WTC11 (cell line): ENCODE measurements at regions of chr3 and their contacts with region 1.

Region 1: DNA sequence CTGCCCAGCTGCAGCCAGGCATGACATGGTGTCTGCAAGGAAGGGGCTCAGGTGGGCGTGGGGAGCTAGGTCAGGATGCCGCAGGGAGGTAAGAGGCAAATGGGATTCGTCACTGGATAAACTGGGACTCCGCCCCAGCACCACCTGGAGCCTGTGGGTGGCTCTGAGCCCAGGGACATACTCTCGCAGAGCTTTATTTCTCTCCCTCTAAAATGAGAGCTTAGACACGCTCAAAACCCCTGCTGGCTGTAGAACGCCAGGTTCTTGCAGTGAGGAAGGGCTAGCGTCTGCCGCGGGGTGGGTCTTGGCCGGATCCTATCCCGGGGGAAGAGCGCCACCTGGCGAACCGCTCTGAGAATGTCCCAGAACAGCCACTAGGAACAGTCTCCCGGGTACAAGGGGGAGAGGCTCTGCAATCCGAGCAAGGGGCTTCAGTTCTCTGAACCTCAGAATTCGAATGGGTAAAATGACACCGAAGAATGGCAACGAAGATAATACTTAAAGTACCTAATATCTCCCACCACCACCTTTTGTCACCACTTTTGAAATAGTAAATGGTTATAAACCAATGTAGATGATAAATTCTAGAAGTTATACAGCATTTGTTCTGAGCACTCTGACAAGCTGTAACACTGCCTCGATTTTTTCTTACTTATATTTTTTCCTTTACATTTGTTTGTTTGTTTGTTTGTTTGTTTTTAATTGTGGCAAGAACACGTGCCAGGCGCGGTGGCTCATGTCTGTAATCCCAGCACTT is 53.2 kb upstream of the SRGAP3 start:
- DNase-seq: peak; percentile 89
- ATAC-seq: peak; percentile 91
- H3K4me3 Mint-ChIP-seq: peak overlapping the region; percentile 70
- H3K27ac Mint-ChIP-seq: no peak overlapping the region
- H3K4me1 Mint-ChIP-seq: peaks cover 14% of the 10 kb centered on the region
- H3K27me3 Mint-ChIP-seq: peaks cover 14% of the 10 kb centered on the region
- CTCF ChIP-seq: peak; percentile 85

Region 2: DNA sequence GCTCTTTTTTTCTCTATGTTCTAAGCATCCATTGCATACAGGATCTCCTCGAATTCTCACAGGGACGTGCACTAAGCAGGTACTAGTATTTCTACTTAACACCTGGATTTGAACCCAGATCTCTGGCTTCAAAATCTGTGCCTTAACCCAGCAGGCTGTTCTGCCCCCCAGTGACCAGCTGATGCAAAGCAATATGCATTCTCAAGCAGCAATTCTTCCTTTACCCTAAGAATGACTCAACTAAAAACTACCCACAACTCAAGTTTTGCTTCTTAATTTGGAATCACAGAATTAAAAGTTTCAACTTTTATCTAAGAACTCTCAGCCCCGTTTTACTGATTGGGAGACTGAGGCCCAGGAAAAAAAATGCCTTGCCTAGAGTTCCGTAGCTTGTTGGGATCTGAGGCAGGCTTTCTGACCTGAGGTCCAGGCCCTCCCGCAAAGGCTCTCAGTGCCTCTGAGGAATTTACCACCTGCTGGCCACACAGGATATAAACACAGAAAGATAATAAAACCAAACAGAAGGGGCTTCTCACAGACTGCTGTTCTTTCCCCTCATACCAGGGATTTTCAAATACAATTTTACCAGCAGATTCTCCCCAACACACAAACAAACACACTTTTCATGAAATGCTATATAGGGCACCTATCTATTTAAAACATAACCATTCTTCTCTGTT is 223.9 kb before region 1 on chr3:
- CTCF ChIA-PET with region 1: interaction called, 12 read pairs
- POLR2A ChIA-PET with region 1: no interaction called
- DNase-seq: no peak
- ATAC-seq: peak; percentile 73
- H3K4me3 Mint-ChIP-seq: no peak overlapping the region
- H3K27ac Mint-ChIP-seq: peak overlapping the region; percentile 12; the same call in 1 of the 2 replicates
- H3K4me1 Mint-ChIP-seq: peaks cover 31% of the 10 kb centered on the region
- H3K27me3 Mint-ChIP-seq: no peaks in the 10 kb centered on the region; the same call in 1 of the 2 replicates
- CTCF ChIP-seq: no peak

Region 3: DNA sequence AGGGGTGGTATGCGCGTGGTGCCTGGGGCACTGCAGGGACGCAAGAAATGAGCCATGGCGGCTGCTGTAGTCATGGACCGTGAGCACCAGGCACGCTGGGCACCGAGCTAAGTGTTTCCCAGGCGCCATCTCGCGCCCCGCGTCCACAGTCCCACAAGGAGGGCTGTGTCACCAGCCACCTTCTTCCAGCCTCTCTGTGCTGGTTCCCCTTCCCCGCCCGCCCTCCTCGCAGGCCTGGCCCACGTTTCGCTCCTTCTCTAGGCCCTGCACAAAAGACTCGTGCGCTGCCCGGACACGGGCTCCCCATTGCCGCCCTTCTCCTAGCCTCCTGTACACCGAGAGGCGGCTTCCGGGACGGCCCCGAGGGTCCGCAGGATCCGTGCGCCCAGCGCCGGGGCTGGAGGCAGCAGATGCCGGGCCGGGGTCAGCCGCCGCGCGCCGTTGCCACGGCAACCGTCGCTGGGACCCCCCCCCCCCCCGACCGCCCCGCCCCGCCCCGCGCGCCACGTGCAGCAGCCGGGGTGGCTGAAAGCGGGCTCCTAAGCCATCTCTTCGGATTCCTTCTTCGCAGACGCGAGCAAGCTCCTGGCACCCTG is 166.6 kb before region 1 on chr3:
- CTCF ChIA-PET with region 1: interaction called, 19 read pairs
- POLR2A ChIA-PET with region 1: no interaction called
- DNase-seq: peak; percentile 61
- ATAC-seq: peak; percentile 87
- H3K4me3 Mint-ChIP-seq: peak overlapping the region; percentile 62
- H3K27ac Mint-ChIP-seq: no peak overlapping the region
- H3K4me1 Mint-ChIP-seq: peaks cover 17% of the 10 kb centered on the region
- H3K27me3 Mint-ChIP-seq: peaks cover 22% of the 10 kb centered on the region
- CTCF ChIP-seq: no peak

Region 4: GRCh38 chr3:9168241-9168741 is 134.3 kb before region 1 on chr3:
- CTCF ChIA-PET with region 1: no interaction called
- POLR2A ChIA-PET with region 1: no interaction called
- DNase-seq: peak; percentile 44
- ATAC-seq: peak; percentile 89
- H3K4me3 Mint-ChIP-seq: no peak overlapping the region
- H3K27ac Mint-ChIP-seq: no peak overlapping the region
- H3K4me1 Mint-ChIP-seq: no peaks in the 10 kb centered on the region; the same call in 1 of the 2 replicates
- H3K27me3 Mint-ChIP-seq: no peaks in the 10 kb centered on the region
- CTCF ChIP-seq: no peak

Region 5: DNA sequence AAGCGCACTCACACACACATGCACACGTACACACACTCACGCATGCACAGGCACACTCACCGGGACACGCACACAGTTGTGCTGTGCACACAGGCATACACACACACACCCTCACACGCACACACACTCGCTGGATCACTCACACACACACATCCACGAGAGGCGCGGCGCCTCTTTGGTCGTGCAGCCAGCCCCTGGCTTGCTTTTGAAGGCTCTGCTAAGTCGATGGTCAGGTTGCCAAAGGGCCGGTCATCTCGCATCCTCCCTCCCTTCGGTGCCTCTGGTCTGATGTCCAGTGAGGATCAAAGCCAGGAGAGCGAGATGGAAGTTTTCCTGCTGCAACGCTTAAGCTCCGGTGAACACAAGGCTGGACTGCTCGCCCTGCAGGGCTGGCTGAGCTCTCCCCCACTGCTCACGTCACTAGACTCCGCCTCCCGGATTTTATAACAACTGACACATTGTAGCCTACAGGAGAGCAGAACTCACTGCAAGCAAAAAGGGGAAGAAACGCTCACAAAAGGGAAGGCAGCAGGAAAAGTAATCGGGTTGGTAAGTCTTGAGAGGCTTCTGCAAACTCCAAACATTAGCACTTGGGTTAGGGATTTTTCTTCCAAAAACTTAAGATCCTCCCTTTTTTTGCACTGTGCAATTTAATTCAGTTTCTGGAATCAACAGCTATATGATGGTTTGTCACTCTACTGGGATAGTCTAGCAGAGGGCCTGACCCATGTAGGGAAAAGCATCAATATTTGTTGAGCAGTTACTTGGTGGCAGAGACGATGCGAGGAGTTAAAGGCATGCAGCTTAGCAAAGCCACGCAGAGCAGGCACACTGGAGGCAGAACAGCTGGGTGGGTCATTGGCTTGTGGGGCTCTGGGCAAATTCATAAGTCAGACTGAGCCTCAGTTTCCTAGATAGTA is 53.1 kb before region 1 on chr3 and contains the start of gene SRGAP3:
- CTCF ChIA-PET with region 1: interaction called, 28 read pairs
- POLR2A ChIA-PET with region 1: interaction called, 3 read pairs
- DNase-seq: peak; percentile 85
- ATAC-seq: peak; percentile 97
- H3K4me3 Mint-ChIP-seq: peak within 1 kb of the TSS; percentile 81
- H3K27ac Mint-ChIP-seq: peak within 1 kb of the TSS; percentile 35
- H3K4me1 Mint-ChIP-seq: peaks cover 56% of the 10 kb centered on the region
- H3K27me3 Mint-ChIP-seq: no peaks in the 10 kb centered on the region
- CTCF ChIP-seq: no peak
- total RNA-seq, gene SRGAP3: 11.8 to 17.9 TPM (median 12.1 TPM) in 3 replicates

Region 6: DNA sequence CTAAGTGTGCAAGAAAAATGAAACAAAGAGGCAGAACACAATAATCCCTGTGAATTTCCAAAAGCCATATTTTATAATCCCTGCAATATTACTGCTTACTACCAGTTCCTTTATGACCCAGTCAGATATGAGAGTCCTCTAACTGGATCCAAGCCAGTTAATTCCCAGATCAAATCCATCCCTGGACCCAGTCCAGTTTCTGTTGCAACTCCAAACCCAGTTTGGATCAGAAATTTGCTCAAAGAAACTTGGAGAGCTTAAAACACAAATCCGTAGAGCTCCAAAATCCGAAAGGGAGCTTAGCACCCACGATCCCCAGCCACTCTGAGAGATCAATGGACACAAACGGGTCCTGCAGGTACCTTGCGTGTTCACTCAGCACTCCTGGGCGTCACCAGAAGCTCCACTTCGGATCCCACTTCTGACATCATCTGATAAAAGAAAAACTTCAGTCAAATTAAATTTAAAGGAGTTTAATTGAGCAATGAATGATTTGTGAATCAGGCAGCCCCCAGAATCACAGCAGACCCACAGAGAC is 27.6 kb after region 1 on chr3:
- CTCF ChIA-PET with region 1: no interaction called
- POLR2A ChIA-PET with region 1: no interaction called
- DNase-seq: no peak
- ATAC-seq: no peak
- H3K4me3 Mint-ChIP-seq: no peak overlapping the region
- H3K27ac Mint-ChIP-seq: no peak overlapping the region
- H3K4me1 Mint-ChIP-seq: peaks cover 9% of the 10 kb centered on the region
- H3K27me3 Mint-ChIP-seq: peaks cover 14% of the 10 kb centered on the region
- CTCF ChIP-seq: no peak

Region 7: GRCh38 chr3:9352917-9353752 is 50.5 kb after region 1 on chr3:
- CTCF ChIA-PET with region 1: interaction called, 17 read pairs
- POLR2A ChIA-PET with region 1: no interaction called
- DNase-seq: peak; percentile 72
- ATAC-seq: peak; percentile 74
- H3K4me3 Mint-ChIP-seq: peak overlapping the region; percentile 45; the same call in 1 of the 2 replicates
- H3K27ac Mint-ChIP-seq: peak overlapping the region; percentile 97
- H3K4me1 Mint-ChIP-seq: peaks cover 46% of the 10 kb centered on the region
- H3K27me3 Mint-ChIP-seq: no peaks in the 10 kb centered on the region
- CTCF ChIP-seq: peak; percentile 68

Region 8: GRCh38 chr3:9384141-9384853 is 81.7 kb after region 1 on chr3:
- CTCF ChIA-PET with region 1: no interaction called
- POLR2A ChIA-PET with region 1: no interaction called
- DNase-seq: no peak
- ATAC-seq: no peak
- H3K4me3 Mint-ChIP-seq: no peak overlapping the region
- H3K27ac Mint-ChIP-seq: peak overlapping the region; percentile 40
- H3K4me1 Mint-ChIP-seq: peaks cover 3% of the 10 kb centered on the region; the same call in 1 of the 2 replicates
- H3K27me3 Mint-ChIP-seq: no peaks in the 10 kb centered on the region
- CTCF ChIP-seq: no peak

Region 9: GRCh38 chr3:9638155-9638554 is 335.6 kb after region 1 on chr3:
- CTCF ChIA-PET with region 1: no interaction called
- POLR2A ChIA-PET with region 1: no interaction called
- DNase-seq: no peak
- ATAC-seq: no peak
- H3K4me3 Mint-ChIP-seq: no peak overlapping the region
- H3K27ac Mint-ChIP-seq: no peak overlapping the region
- H3K4me1 Mint-ChIP-seq: no peaks in the 10 kb centered on the region
- H3K27me3 Mint-ChIP-seq: peaks cover 3% of the 10 kb centered on the region; the same call in 1 of the 2 replicates
- CTCF ChIP-seq: no peak